MCF 10A (cell line): ENCODE measurements at regions of chr1 and their contacts with region 1.

Region 1: DNA sequence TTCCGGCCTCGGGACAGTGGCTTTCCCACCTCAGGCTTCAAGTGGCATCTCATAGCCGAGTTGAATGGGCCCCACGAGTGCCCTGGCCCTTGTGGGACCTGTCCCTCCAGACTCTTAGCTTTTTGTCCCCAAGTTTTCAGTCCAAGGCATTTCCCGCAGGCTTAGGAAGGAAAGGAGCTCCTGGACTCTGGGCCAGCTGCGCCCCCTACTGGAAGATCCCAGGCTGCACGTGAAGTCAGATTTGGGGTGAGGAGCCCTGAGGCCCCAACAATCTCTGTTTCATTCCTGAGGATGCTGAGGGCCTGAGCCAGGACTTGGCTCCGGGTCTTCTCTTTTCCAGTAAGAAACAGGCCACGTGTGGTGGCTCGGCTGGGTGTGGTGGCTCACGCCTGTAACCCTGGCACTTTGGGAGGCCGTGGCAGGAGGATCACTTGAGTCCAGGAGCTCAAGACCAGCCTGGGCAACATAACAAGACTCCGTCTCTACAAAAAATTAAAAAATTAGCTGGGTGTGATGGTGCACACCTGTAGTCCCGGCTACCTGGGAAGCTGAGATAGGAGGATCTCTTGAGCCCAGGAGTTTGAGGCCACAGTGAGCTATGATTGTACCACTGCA is 67.4 kb downstream of the ARHGEF10L start:
- DNase-seq: peak; percentile 78
- H3K4me3 Mint-ChIP-seq: no peak overlapping the region
- H3K27ac Mint-ChIP-seq: no peak overlapping the region
- H3K4me1 Mint-ChIP-seq: no peaks in the 10 kb centered on the region
- H3K27me3 Mint-ChIP-seq: no peaks in the 10 kb centered on the region
- CTCF ChIP-seq: peak; percentile 94

Region 2: DNA sequence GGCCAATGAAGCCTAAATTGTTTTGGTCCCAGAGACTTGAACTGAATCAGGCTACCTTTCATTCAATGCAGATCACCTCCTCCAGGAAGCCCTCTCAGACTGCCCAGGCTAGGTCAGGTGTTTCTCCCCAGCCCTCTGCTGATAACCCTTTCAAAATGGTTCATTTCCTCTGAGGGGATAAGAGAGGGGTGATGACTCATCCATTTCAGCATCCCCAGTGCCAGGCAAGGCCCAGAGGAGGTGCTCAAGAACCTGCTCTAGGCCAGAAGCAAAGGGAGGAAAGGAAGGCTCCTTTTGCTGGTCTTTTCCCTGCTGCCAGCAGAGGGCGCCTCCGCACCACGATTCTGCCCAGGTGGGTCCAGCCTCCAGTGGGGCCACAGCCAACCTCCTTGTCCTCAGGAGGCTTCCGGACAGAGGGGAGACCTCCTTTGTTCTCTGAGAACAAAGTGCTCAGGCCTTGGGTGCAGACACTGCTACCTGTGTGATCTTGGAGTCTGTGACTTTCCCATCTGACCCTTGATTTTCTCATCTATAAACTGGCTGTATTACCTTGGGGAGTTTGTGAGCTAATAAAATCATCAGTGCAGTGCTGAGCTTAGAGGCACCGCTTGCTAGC is 112.7 kb before region 1 on chr1:
- CTCF ChIA-PET with region 1: interaction called, 40 read pairs
- POLR2A ChIA-PET with region 1: interaction called, 3 read pairs
- intact Hi-C with region 1: loop called (anchors 2 kb)
- DNase-seq: peak; percentile 83
- H3K4me3 Mint-ChIP-seq: no peak overlapping the region
- H3K27ac Mint-ChIP-seq: peak overlapping the region; percentile 57
- H3K4me1 Mint-ChIP-seq: peaks cover 17% of the 10 kb centered on the region
- H3K27me3 Mint-ChIP-seq: peaks cover 16% of the 10 kb centered on the region
- CTCF ChIP-seq: peak; percentile 96

Region 3: GRCh38 chr1:17507916-17508315 is 99.0 kb before region 1 on chr1:
- CTCF ChIA-PET with region 1: interaction called, 72 read pairs
- POLR2A ChIA-PET with region 1: no interaction called
- intact Hi-C with region 1: no loop called
- DNase-seq: no peak
- H3K4me3 Mint-ChIP-seq: no peak overlapping the region
- H3K27ac Mint-ChIP-seq: no peak overlapping the region
- H3K4me1 Mint-ChIP-seq: no peaks in the 10 kb centered on the region
- H3K27me3 Mint-ChIP-seq: no peaks in the 10 kb centered on the region
- CTCF ChIP-seq: peak; percentile 22

Region 4: GRCh38 chr1:17587989-17588685 is 18.8 kb before region 1 on chr1:
- CTCF ChIA-PET with region 1: interaction called, 10 read pairs
- POLR2A ChIA-PET with region 1: no interaction called
- intact Hi-C with region 1: no loop called
- DNase-seq: peak; percentile 54
- H3K4me3 Mint-ChIP-seq: peak overlapping the region; percentile 63
- H3K27ac Mint-ChIP-seq: peak overlapping the region; percentile 46
- H3K4me1 Mint-ChIP-seq: peaks cover 31% of the 10 kb centered on the region
- H3K27me3 Mint-ChIP-seq: no peaks in the 10 kb centered on the region
- CTCF ChIP-seq: no peak